Transverse colon (tissue), 4 donors: ENCODE measurements at regions of chr5 and their contacts with region 1.

Region 1: GRCh38 chr5:96113170-96113939 is 151.7 kb upstream of the ELL2 start:
- DNase-seq: no peak
- H3K4me3 ChIP-seq: no peak overlapping the region
- H3K27ac ChIP-seq: no peak overlapping the region
- H3K4me1 ChIP-seq: peaks cover 0 to 10% (median 3%) of the 10 kb centered on the region in 4 donors
- H3K27me3 ChIP-seq: no peaks in the 10 kb centered on the region
- CTCF ChIP-seq: no peak
- EP300 ChIP-seq: no peak
- POLR2A ChIP-seq: no peak

Region 2: DNA sequence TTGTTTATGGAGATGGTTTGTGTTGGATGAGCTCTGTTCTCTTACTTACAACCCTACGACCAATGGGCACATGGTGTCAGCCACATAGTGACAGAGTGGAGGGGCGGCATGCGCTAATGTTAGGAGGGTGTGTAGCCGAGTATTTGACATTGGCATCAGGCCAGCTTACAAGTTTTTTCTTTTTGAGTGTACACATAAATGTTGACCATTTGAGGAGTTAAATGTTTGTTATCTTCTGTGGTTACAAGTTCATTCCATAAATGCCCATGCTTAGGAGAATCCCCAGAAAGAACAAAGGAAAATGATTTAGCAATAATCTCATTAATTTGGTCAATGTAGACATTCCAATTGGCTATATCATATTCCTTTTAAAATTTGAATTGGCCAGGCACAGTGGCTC is 28.4 kb after region 1 on chr5:
- in situ Hi-C with region 1: no loop called
- intact Hi-C with region 1: no loop called
- DNase-seq: no peak
- H3K4me3 ChIP-seq: no peak overlapping the region
- H3K27ac ChIP-seq: peak overlapping the region in 1 of 4 donors; percentile 57
- H3K4me1 ChIP-seq: peaks cover 0 to 27% (median 17%) of the 10 kb centered on the region in 4 donors
- H3K27me3 ChIP-seq: no peaks in the 10 kb centered on the region
- CTCF ChIP-seq: no peak
- EP300 ChIP-seq: no peak
- POLR2A ChIP-seq: no peak

Region 3: DNA sequence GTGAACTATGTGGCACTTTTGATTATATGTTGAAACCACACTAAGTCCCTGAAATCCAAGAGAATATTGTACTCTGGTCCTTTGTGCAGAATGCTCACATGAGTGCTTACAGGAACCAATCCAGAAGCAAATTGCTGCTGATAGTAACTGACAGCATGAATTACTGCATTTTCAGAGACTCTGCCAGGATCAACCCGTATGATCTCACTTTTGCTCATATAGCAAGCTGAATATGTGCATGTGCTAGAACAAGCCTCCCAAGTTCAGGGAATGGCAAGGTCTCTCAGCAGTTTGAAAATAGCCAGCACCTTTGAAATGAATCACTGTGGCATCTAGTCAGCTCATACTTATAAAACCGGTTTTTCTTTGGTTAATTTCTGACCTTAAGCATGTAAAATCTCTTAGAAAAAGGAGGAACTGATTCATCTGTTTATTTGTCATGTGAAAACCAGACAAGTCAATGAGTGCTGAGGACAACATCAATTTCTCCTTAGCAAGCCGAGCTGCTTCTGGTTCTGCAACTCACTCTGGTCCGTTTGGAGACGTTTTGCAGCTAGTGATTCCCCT is 64.0 kb after region 1 on chr5:
- in situ Hi-C with region 1: no loop called
- intact Hi-C with region 1: loop called (anchors 2 kb)
- DNase-seq: no peak
- H3K4me3 ChIP-seq: no peak overlapping the region
- H3K27ac ChIP-seq: no peak overlapping the region
- H3K4me1 ChIP-seq: peaks cover 0 to 12% (median 3%) of the 10 kb centered on the region in 4 donors
- H3K27me3 ChIP-seq: no peaks in the 10 kb centered on the region
- CTCF ChIP-seq: no peak
- EP300 ChIP-seq: no peak
- POLR2A ChIP-seq: no peak

Region 4: DNA sequence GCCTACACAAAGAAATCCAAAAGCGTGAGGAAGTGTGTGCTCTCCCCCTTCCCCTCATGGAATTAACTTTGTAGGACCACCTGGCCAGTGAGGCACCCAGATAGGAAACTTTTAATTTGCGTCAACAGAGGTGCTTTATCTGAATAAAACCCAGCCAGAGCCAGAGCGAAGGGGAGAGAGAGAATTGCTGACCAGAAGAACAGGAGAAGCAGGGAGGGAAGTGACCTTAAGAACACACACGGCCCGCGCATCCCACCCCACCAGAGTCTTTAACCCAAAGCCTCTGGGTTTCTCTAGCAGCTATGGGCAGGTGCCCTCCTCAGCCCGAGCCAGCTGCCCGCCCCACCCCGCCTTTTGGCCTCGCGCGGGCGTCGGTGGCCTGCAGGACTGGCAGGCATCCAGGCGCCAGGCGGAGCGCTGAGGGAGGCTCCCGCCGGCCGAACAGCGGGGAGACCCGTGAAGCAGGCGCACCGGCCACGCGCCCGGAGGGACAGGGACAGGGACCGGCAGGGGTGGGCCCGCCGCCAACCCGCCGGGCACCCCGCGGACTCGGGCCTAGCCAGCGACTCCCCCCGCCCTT is 693.8 kb after region 1 on chr5:
- in situ Hi-C with region 1: no loop called
- intact Hi-C with region 1: no loop called
- DNase-seq: peak; percentile 88
- H3K4me3 ChIP-seq: peak overlapping the region; percentile 69 to 90 (median 88)
- H3K27ac ChIP-seq: peak overlapping the region; percentile 97 to 100 (median 100)
- H3K4me1 ChIP-seq: peaks cover 14 to 55% (median 32%) of the 10 kb centered on the region in 4 donors
- H3K27me3 ChIP-seq: no peaks in the 10 kb centered on the region
- CTCF ChIP-seq: no peak
- EP300 ChIP-seq: no peak
- POLR2A ChIP-seq: no peak